MCF 10A (cell line): ENCODE measurements at regions of chr4 and their contacts with region 1.

Region 1: GRCh38 chr4:70687821-70688794 is at the start of gene UTP3:
- DNase-seq: peak; percentile 98
- H3K4me3 Mint-ChIP-seq: peak within 1 kb of the TSS; percentile 98
- H3K27ac Mint-ChIP-seq: peak within 1 kb of the TSS; percentile 96
- H3K4me1 Mint-ChIP-seq: peaks cover 19% of the 10 kb centered on the region
- H3K27me3 Mint-ChIP-seq: no peaks in the 10 kb centered on the region
- CTCF ChIP-seq: peak; percentile 92
- total RNA-seq, gene UTP3: 45.4 and 47.5 TPM in 2 replicates

Region 2: GRCh38 chr4:70589785-70590184 is 98.3 kb before region 1 on chr4:
- CTCF ChIA-PET with region 1: no interaction called
- POLR2A ChIA-PET with region 1: no interaction called
- intact Hi-C with region 1: no loop called
- DNase-seq: no peak
- H3K4me3 Mint-ChIP-seq: no peak overlapping the region
- H3K27ac Mint-ChIP-seq: no peak overlapping the region
- H3K4me1 Mint-ChIP-seq: no peaks in the 10 kb centered on the region
- H3K27me3 Mint-ChIP-seq: no peaks in the 10 kb centered on the region
- CTCF ChIP-seq: no peak

Region 3: DNA sequence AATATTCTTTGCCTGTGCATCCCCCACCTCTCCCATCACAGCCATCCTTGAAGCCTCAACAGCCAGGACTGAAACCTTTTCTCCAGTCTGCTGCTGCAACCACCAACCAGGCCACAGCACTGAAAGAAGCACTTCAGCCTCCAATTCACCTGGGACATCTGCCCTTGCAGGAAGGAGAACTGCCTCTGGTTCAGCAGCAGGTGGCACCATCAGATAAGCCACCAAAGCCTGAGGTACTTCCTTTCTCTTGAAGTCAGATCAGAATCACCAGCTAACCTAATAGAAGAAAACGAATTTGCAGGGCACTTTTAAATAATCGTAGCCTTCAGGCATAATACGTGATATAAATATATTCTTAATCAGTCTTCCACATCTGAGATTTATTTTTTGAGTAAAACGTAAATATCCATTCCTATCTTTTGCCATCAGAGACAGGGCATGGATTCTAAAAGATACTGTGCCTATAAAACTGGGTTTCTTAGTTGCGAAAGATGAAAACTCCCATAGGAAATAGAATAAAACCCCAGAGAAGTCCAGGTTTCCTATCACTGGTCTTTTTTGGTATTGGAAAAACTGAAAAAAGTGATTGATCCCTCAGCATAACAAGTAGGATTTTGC is 86.6 kb before region 1 on chr4:
- CTCF ChIA-PET with region 1: interaction called, 6 read pairs
- POLR2A ChIA-PET with region 1: no interaction called
- intact Hi-C with region 1: loop called (anchors 1 kb)
- DNase-seq: peak; percentile 76
- H3K4me3 Mint-ChIP-seq: no peak overlapping the region
- H3K27ac Mint-ChIP-seq: no peak overlapping the region
- H3K4me1 Mint-ChIP-seq: no peaks in the 10 kb centered on the region
- H3K27me3 Mint-ChIP-seq: no peaks in the 10 kb centered on the region
- CTCF ChIP-seq: peak; percentile 72

Region 4: GRCh38 chr4:70651864-70652506 is 36.1 kb before region 1 on chr4:
- CTCF ChIA-PET with region 1: interaction called, 6 read pairs
- POLR2A ChIA-PET with region 1: interaction called, 5 read pairs
- intact Hi-C with region 1: loop called (anchors 5 kb)
- DNase-seq: peak; percentile 40
- H3K4me3 Mint-ChIP-seq: no peak overlapping the region
- H3K27ac Mint-ChIP-seq: no peak overlapping the region
- H3K4me1 Mint-ChIP-seq: no peaks in the 10 kb centered on the region
- H3K27me3 Mint-ChIP-seq: peaks cover 12% of the 10 kb centered on the region
- CTCF ChIP-seq: peak; percentile 69

Region 5: GRCh38 chr4:70734168-70734954 is 46.3 kb after region 1 on chr4:
- CTCF ChIA-PET with region 1: interaction called, 15 read pairs
- POLR2A ChIA-PET with region 1: interaction called, 58 read pairs
- intact Hi-C with region 1: no loop called
- DNase-seq: peak; percentile 60
- H3K4me3 Mint-ChIP-seq: peak overlapping the region; percentile 79
- H3K27ac Mint-ChIP-seq: peak overlapping the region; percentile 89
- H3K4me1 Mint-ChIP-seq: peaks cover 14% of the 10 kb centered on the region
- H3K27me3 Mint-ChIP-seq: no peaks in the 10 kb centered on the region
- CTCF ChIP-seq: no peak

Region 6: DNA sequence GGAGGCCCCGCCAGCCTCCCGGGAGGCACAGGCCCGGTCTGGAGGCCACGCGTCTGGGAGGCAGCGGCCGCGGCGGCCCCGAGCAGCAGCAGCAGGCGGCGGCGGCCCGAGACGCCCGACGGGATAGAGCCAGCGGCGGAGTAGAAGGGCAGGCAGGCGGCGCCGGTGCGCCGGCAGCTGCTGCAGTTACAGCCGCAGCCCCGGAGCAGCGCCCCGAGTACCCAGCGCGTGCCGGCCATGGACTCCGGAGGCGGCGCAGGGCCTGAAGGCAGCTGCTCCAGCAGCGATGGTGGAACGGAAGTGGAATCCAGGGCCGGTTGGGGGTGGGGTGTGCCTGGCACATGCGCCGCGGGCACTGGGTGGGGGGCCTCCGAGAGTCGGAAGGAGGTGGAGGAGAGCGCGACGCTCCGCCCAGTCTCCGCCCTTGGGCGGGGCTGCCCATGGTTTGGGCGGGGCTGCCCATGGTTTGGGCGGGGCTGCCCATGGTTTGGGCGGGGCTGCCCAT is 151.5 kb after region 1 on chr4 and contains the start of gene GRSF1:
- CTCF ChIA-PET with region 1: interaction called, 3 read pairs
- POLR2A ChIA-PET with region 1: interaction called, 10 read pairs
- intact Hi-C with region 1: loop called (anchors 1 kb)
- DNase-seq: peak; percentile 92
- H3K4me3 Mint-ChIP-seq: peak within 1 kb of the TSS; percentile 95
- H3K27ac Mint-ChIP-seq: peak within 1 kb of the TSS; percentile 92
- H3K4me1 Mint-ChIP-seq: peaks cover 9% of the 10 kb centered on the region
- H3K27me3 Mint-ChIP-seq: no peaks in the 10 kb centered on the region
- CTCF ChIP-seq: no peak
- total RNA-seq, gene GRSF1: 60.2 and 69.3 TPM in 2 replicates

Region 7: DNA sequence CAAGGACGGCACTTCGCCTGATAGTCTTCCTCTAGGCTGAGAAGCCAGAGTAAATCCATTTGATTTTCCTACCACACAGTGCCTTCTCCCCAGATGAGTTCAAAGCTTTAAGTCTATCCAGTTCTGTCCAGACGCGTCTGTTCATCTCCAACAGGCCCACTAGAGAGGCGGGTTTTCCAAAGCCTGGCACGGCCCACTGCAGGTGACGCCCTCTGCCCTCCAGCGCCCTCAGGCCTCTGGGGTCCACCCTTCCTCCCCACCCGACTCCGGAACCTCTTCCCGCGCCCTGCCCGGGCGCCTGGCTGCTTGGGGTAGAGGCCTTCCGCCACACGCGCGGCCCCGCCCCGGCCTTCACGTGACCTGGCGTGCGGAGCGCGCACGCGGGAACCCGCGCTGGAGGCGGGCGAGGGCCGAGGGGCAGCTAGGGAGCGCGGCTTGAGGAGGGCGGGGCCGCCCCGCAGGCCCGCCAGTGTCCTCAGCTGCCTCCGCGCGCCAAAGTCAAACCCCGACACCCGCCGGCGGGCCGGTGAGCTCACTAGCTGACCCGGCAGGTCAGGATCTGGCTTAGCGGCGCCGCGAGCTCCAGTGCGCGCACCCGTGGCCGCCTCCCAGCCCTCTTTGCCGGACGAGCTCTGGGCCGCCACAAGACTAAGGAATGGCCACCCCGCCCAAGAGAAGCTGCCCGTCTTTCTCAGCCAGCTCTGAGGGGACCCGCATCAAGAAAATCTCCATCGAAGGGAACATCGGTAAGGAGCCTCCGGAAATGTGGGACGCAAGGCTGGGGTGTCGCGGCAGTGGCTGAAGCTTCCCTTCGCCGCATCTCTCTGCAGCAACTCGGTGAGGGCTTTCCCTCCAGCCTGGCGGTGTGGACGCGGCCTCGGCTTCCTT is 305.3 kb after region 1 on chr4 and contains the start of gene DCK:
- CTCF ChIA-PET with region 1: interaction called, 11 read pairs
- POLR2A ChIA-PET with region 1: interaction called, 9 read pairs
- intact Hi-C with region 1: loop called (anchors 5 kb)
- DNase-seq: peak; percentile 92
- H3K4me3 Mint-ChIP-seq: peak within 1 kb of the TSS; percentile 85
- H3K27ac Mint-ChIP-seq: peak within 1 kb of the TSS; percentile 85
- H3K4me1 Mint-ChIP-seq: peaks cover 26% of the 10 kb centered on the region
- H3K27me3 Mint-ChIP-seq: no peaks in the 10 kb centered on the region
- CTCF ChIP-seq: no peak
- total RNA-seq, gene DCK: 8.0 and 9.5 TPM in 2 replicates